SK-N-SH (cell line): ENCODE measurements at regions of chr11 and their contacts with region 1.

Region 1: GRCh38 chr11:68297812-68298658 is 14.4 kb upstream of the LRP5 start:
- DNase-seq: peak; percentile 92
- H3K4me3 ChIP-seq: peak overlapping the region in 1 of 2 experiments; percentile 34; a peak in 1 of 4 replicates
- H3K27ac ChIP-seq: no peak overlapping the region
- H3K4me1 ChIP-seq: peaks cover 0 to 7% of the 10 kb centered on the region in 2 experiments; a peak in 2 of 4 replicates
- H3K27me3 ChIP-seq: no peaks in the 10 kb centered on the region
- CTCF ChIP-seq: peak; percentile 92
- EP300 ChIP-seq: no peak
- RAD21 ChIP-seq: peak; percentile 89

Region 2: GRCh38 chr11:68213555-68214174 is 84.4 kb before region 1 on chr11:
- CTCF ChIA-PET with region 1: interaction called, 23 read pairs
- POLR2A ChIA-PET with region 1: no interaction called
- DNase-seq: peak; percentile 94
- H3K4me3 ChIP-seq: peak overlapping the region; percentile 77 to 96
- H3K27ac ChIP-seq: peak overlapping the region; percentile 88 to 97
- H3K4me1 ChIP-seq: peaks cover 11 to 27% of the 10 kb centered on the region in 2 experiments; a peak in 3 of 4 replicates
- H3K27me3 ChIP-seq: no peaks in the 10 kb centered on the region; the same call in 1 of the 2 replicates
- CTCF ChIP-seq: no peak
- EP300 ChIP-seq: no peak
- RAD21 ChIP-seq: no peak

Region 3: DNA sequence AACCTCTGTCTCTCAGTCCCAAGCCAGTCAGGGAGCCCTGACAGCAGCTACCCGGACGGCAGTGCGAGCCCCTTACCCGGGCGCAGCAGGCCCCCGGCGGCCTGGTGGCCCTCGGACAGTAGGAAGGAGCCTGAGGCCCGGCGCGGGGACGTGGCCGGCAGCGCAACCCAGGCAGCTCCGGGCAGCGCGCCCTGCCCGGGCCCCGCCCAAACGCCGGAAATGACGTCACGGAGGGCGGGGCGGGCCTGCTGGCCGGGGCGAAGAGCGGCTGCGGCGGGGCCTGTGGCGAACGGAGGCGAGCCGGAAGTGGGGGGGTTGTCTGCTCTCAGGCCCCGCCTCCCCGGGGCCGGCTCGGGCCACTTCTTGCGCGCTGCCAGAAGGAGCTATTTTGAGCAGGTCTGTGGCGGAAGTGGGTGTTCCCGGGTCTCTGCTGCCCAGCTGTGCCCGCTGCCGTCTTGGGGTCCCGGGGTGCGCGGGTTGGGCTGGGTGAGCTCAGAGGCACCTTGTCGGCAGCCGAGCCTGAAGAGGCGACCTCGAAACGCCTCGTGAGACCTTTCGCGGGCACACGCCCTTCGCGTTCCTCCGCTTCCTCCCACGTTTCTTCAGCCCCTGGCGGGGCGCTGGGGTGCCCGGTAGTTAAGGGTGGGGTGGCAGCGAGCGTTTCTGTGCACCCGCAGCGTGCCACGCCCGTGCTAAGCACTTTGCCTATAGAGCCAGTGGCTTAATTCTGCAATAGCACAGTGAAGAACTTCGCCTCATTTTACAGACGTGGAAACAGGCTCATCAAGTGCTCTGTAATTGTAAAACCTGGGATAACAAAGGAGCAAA is 26.0 kb before region 1 on chr11 and contains the start of gene C11orf24:
- CTCF ChIA-PET with region 1: interaction called, 68 read pairs
- POLR2A ChIA-PET with region 1: no interaction called
- DNase-seq: peak; percentile 100
- H3K4me3 ChIP-seq: peak within 1 kb of the TSS; percentile 67 to 75
- H3K27ac ChIP-seq: peak within 1 kb of the TSS; percentile 87 to 94
- H3K4me1 ChIP-seq: peaks cover 14 to 17% of the 10 kb centered on the region in 2 experiments; a peak in 3 of 4 replicates
- H3K27me3 ChIP-seq: no peaks in the 10 kb centered on the region
- CTCF ChIP-seq: no peak
- EP300 ChIP-seq: peak in 1 of 2 experiments; percentile 34; a peak in 2 of 4 replicates
- RAD21 ChIP-seq: no peak
- polyA plus RNA-seq, gene C11orf24: 50.9 and 52.1 TPM in 2 replicates

Region 4: DNA sequence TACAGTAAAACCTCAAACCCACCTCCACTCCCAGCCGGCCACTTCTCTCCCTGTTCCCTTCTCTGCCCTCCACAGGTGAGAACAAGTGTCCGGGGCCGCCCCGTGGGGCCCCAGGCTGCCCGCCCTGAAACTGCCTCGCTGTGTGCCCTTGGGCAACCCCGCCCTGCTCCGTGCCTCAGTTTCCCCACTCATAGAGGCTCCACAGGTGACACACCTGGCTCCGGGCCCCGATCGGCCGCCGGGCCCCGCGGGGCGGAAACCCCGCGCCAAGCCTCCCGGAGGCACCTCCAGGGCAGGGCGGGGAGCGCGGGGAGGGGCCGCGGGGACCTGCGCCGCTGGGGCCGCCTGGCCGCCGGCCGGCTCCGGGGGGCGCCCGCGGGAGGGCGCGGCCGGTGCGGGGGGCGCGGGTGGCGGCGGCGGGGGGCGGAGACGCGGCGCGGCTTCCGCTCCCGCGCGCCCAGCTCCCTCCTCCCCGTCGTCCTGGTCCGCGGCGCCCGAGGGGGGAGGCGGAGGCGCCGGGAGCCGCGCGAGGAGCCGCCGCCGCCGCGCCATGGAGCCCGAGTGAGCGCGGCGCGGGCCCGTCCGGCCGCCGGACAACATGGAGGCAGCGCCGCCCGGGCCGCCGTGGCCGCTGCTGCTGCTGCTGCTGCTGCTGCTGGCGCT is 14.2 kb after region 1 on chr11 and contains the start of gene LRP5:
- CTCF ChIA-PET with region 1: interaction called, 70 read pairs
- POLR2A ChIA-PET with region 1: interaction called, 3 read pairs
- DNase-seq: peak; percentile 94
- H3K4me3 ChIP-seq: peak within 1 kb of the TSS; percentile 67 to 75
- H3K27ac ChIP-seq: peak within 1 kb of the TSS; percentile 63 to 79; a peak in 3 of 4 replicates
- H3K4me1 ChIP-seq: peaks cover 19 to 28% of the 10 kb centered on the region in 2 experiments; a peak in 2 of 4 replicates
- H3K27me3 ChIP-seq: no peaks in the 10 kb centered on the region
- CTCF ChIP-seq: no peak
- EP300 ChIP-seq: no peak
- RAD21 ChIP-seq: no peak
- polyA plus RNA-seq, gene LRP5: 10.2 and 15.0 TPM in 2 replicates

Region 5: DNA sequence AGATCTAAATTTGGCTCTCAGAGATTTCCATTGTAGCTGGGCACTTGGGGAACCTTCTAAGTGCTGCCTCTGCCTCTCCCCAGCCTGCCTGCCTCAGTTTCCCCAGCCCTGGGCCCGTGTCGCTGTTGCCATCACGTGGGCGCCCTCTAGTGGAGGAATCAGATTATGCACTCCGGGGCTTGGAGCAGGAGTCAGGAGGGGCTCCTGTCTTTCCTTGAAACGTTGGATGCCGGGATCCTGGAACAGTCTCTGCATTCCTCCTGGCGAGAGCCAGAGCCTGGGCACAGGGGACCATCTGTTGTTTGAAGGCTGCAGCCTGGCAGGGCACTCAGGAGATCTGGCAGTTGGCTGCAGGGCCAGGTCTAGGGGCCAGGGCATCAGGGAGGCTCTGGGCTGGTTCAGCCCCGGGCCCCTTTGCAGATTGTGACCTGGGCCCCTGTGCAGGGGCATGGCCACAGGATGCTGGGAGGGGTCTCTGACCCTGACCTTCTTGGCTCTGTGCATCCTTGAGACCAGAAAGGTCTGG is 86.0 kb after region 1 on chr11:
- CTCF ChIA-PET with region 1: interaction called, 49 read pairs
- POLR2A ChIA-PET with region 1: no interaction called
- DNase-seq: peak; percentile 87
- H3K4me3 ChIP-seq: peak overlapping the region in 1 of 2 experiments; percentile 33; a peak in 1 of 4 replicates
- H3K27ac ChIP-seq: no peak overlapping the region; a peak in 1 of 4 replicates
- H3K4me1 ChIP-seq: peaks cover 0 to 16% of the 10 kb centered on the region in 2 experiments; a peak in 1 of 4 replicates
- H3K27me3 ChIP-seq: no peaks in the 10 kb centered on the region
- CTCF ChIP-seq: peak; percentile 98
- EP300 ChIP-seq: no peak
- RAD21 ChIP-seq: peak; percentile 89

Region 6: GRCh38 chr11:68480852-68481510 is 182.9 kb after region 1 on chr11:
- CTCF ChIA-PET with region 1: no interaction called
- POLR2A ChIA-PET with region 1: no interaction called
- DNase-seq: no peak
- H3K4me3 ChIP-seq: no peak overlapping the region
- H3K27ac ChIP-seq: no peak overlapping the region
- H3K4me1 ChIP-seq: no peaks in the 10 kb centered on the region; a peak in 1 of 4 replicates
- H3K27me3 ChIP-seq: no peaks in the 10 kb centered on the region
- CTCF ChIP-seq: no peak
- EP300 ChIP-seq: no peak
- RAD21 ChIP-seq: no peak